H1 (cell line): ENCODE measurements at regions of chr5 and their contacts with region 1.

Region 1: DNA sequence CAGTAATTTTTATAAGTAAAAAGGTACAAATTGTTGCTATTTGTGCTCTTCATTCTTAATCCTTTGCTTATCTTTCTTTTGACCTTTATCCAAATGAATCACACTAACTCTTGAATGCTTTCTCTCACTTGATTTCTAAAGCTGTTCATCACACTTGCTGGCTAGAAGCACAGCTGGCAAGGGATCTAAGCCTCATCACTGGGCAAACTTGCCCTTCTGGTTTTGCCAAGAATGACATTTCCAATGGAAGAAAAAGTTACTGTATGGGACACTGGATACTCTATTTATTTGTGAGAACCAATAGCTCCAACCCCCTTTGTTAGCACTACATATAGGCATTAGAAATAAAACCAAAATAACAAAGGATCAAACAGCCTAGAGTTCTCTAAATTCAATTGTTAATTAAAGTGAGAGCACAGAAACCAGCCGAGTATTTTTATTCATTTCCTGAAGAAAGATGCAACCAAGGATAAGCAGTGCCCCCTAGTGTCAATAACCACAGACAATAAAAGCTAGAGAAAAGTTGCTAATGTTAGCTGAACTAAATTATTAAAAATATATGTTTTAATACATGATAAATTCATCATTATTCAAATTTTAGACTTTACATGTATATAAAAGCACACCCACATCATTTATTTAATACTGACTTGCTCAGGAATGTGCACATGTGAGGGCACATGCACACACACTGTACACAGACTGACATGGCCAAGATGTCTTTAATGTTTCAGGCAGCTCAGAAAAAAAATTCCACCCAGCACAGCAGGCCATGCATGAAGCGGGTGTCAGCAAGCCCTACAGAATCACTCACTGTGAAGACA is 59.8 kb upstream of the POU5F2 start:
- DNase-seq: no peak
- H3K4me3 ChIP-seq: no peak overlapping the region
- H3K27ac ChIP-seq: no peak overlapping the region
- H3K4me1 ChIP-seq: peaks cover 0 to 2% (median 0%) of the 10 kb centered on the region in 4 experiments; a peak in 1 of 7 replicates
- H3K27me3 ChIP-seq: 0 out of 7 replicates have a peak, but pooled peaks cover 0 to 2% (median 0%) of the 10 kb centered on the region in 4 experiments
- CTCF ChIP-seq: peak in 2 of 3 experiments; percentile 37 to 44; a peak in 2 of 4 replicates
- EP300 ChIP-seq: no peak
- POLR2A ChIP-seq: no peak
- RAD21 ChIP-seq: peak; percentile 73 to 79

Region 2: DNA sequence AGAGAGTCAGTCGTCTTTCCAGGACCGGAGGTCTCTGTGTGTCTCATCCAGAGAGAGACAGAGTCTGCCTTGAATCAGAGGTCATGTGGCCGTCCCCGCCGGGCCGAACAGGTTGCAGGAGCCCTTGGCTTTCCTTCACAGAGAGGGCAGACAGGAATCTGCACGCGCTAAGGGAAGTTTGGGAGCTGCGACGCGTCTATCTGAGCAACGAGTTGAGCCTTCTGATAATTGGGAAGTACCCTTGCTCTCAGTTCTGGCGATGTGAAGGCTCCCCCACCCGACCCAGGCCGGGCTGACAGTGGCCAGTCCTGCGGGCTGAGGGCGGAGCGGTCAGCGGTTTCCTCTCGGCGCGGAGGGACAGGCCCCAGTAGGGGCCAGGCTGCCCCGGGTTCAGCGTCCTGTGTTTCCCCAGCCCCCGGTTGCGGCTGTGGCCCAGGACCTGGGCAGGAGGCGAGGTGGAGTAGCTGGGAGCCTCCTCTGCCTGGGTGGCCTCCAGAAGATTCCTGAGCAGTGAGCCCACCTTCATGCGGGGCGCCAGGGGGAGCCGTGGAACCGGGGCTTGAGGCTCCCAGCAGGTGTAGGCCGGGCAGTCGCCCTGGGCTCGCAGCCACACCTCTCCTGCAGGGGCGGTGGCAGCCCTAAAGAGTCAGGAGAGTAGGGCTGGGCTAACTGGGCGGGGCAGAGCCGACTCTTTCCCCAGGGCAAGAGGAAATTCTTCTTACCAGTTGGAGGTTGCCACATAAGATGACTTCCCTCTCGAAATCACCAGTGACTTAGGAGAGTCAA is 204.3 kb before region 1 on chr5:
- CTCF ChIA-PET with region 1: interaction called, 20 read pairs
- POLR2A ChIA-PET with region 1: no interaction called
- DNase-seq: no peak
- H3K4me3 ChIP-seq: peak overlapping the region in 3 of 4 experiments; percentile 13 to 47 (median 15); a peak in 5 of 8 replicates
- H3K27ac ChIP-seq: no peak overlapping the region
- H3K4me1 ChIP-seq: peaks cover 5 to 28% (median 18%) of the 10 kb centered on the region in 4 experiments
- H3K27me3 ChIP-seq: peaks cover 94 to 100% (median 97%) of the 10 kb centered on the region in 4 experiments
- CTCF ChIP-seq: peak; percentile 31 to 49 (median 42)
- EP300 ChIP-seq: no peak
- POLR2A ChIP-seq: no peak
- RAD21 ChIP-seq: peak; percentile 61 to 69

Region 3: DNA sequence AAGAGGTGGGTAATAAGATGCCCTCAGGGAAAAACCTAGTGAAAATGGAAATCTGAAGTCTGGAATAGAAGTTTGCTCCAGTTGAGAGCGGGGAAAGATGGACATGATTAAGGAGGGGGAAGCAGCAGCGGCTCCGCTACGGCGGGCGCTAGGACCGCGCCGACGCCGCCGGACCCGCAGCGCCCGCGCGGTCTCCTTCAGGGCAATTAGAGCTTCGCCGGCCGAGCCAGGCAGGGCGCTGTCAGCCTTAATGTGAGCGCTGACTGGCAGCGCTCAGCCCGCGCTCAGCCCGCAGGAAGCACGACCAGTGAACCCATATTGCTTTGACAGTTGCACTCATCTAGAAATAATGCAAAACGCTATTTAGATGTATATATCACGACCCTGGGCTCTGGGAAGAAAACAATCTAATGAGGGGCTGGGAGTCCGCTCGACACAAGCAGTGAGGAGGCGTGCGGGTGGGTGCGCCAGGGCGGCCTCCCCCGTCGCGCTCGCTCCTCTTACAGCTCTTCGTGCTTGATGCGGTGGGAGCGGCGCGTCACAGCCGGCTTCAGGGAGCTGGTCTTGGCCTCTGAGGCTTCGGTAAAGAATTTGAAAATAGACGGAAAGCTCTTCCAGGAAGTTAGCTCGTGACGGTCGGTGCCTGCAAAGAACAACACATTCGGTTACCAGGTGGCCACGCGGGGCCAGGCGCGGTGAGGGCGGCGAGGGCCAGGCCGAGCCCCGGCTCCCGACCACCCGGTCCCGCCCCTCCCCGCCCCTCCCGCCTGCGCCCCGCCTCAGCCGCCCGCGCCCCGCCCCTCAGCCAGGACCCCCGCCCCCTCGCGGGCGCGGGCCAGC is 180.5 kb before region 1 on chr5:
- CTCF ChIA-PET with region 1: interaction called, 29 read pairs
- POLR2A ChIA-PET with region 1: no interaction called
- DNase-seq: peak in 1 of 2 experiments; percentile 72
- H3K4me3 ChIP-seq: peak overlapping the region; percentile 60 to 82 (median 64)
- H3K27ac ChIP-seq: no peak overlapping the region
- H3K4me1 ChIP-seq: peaks cover 0 to 5% (median 2%) of the 10 kb centered on the region in 4 experiments; a peak in 3 of 7 replicates
- H3K27me3 ChIP-seq: peaks cover 30 to 69% (median 49%) of the 10 kb centered on the region in 4 experiments
- CTCF ChIP-seq: no peak
- EP300 ChIP-seq: peak in 1 of 2 experiments; percentile 29; a peak in 1 of 3 replicates
- POLR2A ChIP-seq: no peak
- RAD21 ChIP-seq: peak; percentile 39 to 50; a peak in 3 of 4 replicates

Region 4: DNA sequence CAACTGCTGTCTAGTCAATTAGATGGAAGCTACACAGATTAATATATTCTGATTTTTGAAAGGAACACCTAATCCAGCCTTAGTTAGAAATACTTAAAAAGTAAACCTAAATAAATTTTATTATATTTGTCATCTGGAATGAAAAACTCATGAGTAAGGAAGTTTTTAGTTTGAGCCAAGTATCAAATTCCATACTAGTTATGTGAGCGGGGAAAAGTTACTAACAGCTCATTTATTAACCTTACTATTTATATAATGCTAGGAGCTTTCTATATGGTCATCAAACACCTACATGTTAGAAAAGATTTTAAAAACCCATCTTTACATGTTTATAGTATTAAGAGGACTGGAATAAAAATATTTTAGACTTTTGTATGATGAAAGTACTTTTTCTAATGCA is 18.2 kb before region 1 on chr5:
- CTCF ChIA-PET with region 1: interaction called, 26 read pairs
- POLR2A ChIA-PET with region 1: no interaction called
- DNase-seq: no peak
- H3K4me3 ChIP-seq: no peak overlapping the region
- H3K27ac ChIP-seq: no peak overlapping the region
- H3K4me1 ChIP-seq: no peaks in the 10 kb centered on the region
- H3K27me3 ChIP-seq: peaks cover 0 to 2% (median 0%) of the 10 kb centered on the region in 4 experiments; a peak in 1 of 7 replicates
- CTCF ChIP-seq: no peak
- EP300 ChIP-seq: no peak
- POLR2A ChIP-seq: no peak
- RAD21 ChIP-seq: no peak

Region 5: DNA sequence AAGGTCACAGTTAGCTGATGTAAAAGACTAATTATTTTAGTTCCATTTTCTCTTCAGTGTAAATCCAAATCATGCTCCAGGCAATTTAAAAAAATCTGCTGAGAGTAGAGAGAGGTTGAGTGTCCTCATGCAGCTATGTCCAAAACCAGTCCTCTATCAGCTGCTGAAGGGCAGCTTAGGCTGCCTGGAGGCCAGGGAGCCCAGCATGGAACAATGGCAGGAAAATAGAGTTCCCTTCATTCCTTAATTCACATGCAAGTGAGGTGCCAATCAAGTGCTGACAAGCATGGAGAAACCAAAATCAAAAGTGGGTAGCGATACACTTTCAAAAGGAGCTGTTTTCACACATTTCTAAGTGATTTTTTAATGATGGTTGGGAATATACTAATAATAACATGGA is 18.5 kb after region 1 on chr5:
- CTCF ChIA-PET with region 1: interaction called, 17 read pairs
- POLR2A ChIA-PET with region 1: no interaction called
- DNase-seq: no peak
- H3K4me3 ChIP-seq: no peak overlapping the region
- H3K27ac ChIP-seq: no peak overlapping the region
- H3K4me1 ChIP-seq: peaks cover 0 to 2% (median 0%) of the 10 kb centered on the region in 4 experiments; a peak in 1 of 7 replicates
- H3K27me3 ChIP-seq: peaks cover 0 to 1% (median 0%) of the 10 kb centered on the region in 4 experiments; a peak in 1 of 7 replicates
- CTCF ChIP-seq: no peak
- EP300 ChIP-seq: no peak
- POLR2A ChIP-seq: no peak
- RAD21 ChIP-seq: no peak

Region 6: DNA sequence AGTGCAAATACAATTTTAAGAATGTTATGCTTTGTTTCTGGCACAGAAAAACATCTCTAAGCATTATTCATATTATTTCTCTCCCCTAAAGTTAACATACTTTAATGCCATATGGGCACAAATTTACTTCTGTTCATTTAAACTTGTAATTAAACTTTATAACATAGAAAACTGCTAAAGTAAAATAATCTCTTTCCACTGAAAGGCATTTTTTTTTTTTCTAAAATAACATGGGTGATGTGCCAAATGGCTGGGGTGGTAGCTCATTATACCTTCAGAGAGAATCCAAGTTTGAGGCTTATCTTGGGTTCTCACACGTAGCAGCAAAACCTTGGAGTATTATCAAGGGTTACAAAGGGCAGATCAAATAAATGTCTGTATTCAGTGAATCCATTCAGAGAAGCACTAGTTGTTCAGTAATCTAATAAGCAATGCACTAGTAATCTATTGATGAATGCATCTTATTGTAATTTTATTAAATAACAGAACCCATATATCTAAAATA is 197.8 kb after region 1 on chr5:
- CTCF ChIA-PET with region 1: no interaction called
- POLR2A ChIA-PET with region 1: no interaction called
- DNase-seq: no peak
- H3K4me3 ChIP-seq: no peak overlapping the region
- H3K27ac ChIP-seq: no peak overlapping the region
- H3K4me1 ChIP-seq: no peaks in the 10 kb centered on the region
- H3K27me3 ChIP-seq: no peaks in the 10 kb centered on the region
- CTCF ChIP-seq: no peak
- EP300 ChIP-seq: no peak
- POLR2A ChIP-seq: no peak
- RAD21 ChIP-seq: no peak